BJ (cell line): ENCODE measurements at regions of chr15 and their contacts with region 1.

Region 1: DNA sequence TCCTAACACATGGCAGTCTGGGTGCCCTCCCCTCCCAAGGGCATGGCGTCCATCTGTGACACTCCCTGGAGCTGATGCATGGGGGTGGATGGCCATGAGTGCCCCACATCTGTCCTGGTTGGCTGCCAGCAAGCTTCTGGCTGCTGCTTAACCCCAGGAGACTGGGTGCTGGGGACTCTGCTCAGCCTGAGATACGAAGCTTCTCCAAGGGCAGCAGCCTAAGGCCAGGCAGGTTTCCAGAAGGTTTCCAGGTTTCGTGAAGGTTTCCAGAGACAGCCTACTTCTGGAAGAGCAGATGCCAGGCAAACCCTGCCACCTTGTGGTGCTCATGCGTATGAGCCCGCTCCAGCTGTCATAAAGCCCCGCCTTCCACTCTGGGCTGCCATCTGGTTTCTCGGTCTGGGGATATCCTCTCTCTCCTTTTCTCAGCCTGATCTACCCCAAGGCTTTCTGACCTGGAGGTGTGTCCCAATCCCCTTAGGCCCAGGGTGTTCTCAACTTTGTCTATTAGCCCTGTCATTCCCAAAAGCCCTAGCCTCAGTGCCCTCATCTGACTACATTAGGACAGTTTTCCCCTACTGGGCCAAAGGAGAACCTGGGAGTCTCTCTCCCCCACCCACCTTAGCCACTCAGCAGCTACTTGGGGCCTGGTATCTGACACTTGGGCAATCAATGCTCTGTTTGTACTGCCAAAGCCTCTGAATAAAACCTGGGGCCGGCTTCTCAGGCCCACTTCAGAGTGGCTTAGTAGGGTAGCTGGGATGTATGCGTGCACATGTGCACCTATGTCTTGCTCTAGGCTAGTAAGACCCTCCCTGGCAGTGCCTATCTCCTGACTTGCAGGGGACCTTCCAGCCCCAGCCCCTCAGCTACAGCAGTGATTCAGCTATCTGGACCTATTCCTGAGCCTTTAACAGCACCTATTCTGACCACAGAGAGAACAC is 12.0 kb downstream of the MRPL46 start:
- DNase-seq: no peak
- H3K4me3 ChIP-seq: no peak overlapping the region
- H3K27me3 ChIP-seq: no peaks in the 10 kb centered on the region
- CTCF ChIP-seq: peak; percentile 88

Region 2: GRCh38 chr15:88274553-88275460 is 180.3 kb before region 1 on chr15:
- CTCF ChIA-PET with region 1: interaction called, 32 read pairs
- POLR2A ChIA-PET with region 1: no interaction called
- DNase-seq: no peak
- H3K4me3 ChIP-seq: no peak overlapping the region
- H3K27me3 ChIP-seq: peaks cover 2% of the 10 kb centered on the region
- CTCF ChIP-seq: peak; percentile 91

Region 3: GRCh38 chr15:88438181-88438580 is 17.0 kb before region 1 on chr15:
- CTCF ChIA-PET with region 1: interaction called, 14 read pairs
- POLR2A ChIA-PET with region 1: no interaction called
- DNase-seq: no peak
- H3K4me3 ChIP-seq: no peak overlapping the region
- H3K27me3 ChIP-seq: no peaks in the 10 kb centered on the region
- CTCF ChIP-seq: no peak

Region 4: DNA sequence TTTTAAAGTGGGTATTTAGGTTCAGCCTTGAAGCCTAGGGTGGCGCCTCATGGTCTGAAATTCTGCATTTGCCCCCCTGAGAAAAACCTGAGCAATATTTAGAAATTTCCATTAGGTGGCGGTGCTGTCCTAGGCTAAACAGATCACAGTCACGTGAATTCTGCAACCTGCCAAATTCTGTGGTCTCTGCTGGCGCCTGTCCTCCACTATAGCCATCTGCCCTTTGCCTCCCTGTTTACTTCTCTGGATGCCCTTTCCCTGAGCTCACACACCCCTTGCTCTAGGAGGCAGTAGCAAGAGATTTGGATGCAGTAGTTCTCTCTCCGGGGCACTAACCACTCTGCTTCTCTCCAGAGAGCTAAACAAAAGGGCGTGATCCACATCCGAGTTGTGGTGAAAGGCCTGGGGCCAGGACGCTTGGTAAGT is 21.5 kb after region 1 on chr15:
- CTCF ChIA-PET with region 1: no interaction called
- POLR2A ChIA-PET with region 1: no interaction called
- DNase-seq: no peak
- H3K4me3 ChIP-seq: no peak overlapping the region
- H3K27me3 ChIP-seq: no peaks in the 10 kb centered on the region
- CTCF ChIP-seq: peak; percentile 62

Region 5: DNA sequence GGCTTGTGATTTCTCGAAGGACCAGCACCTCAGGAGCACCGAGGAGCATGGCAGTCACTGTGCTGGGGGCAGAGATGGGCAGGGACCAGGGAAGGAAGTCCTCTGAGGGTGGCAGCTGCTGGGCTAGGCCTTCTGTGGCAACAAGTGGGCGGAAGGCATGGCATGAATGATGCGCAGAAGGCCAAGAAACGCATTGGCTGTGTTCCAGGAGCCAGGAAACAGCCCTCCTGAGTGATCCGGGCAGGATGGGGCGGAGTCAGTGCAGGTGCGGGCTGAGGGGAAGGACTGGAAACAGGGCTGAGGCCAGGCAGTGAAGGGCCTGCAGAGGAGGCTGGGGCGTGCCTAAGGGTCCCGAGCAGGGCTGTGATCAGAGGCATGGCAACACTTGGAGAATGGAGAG is 36.0 kb after region 1 on chr15:
- CTCF ChIA-PET with region 1: no interaction called
- POLR2A ChIA-PET with region 1: no interaction called
- DNase-seq: no peak
- H3K4me3 ChIP-seq: no peak overlapping the region
- H3K27me3 ChIP-seq: no peaks in the 10 kb centered on the region
- CTCF ChIP-seq: no peak